K562 (cell line): ENCODE measurements at regions of chr16 and their contacts with region 1.

Region 1: GRCh38 chr16:85569615-85570212 is 43.4 kb upstream of the GSE1 start:
- DNase-seq: peak; percentile 62 to 96 (median 79)
- ATAC-seq: peak; percentile 60
- H3K4me3 ChIP-seq: peak overlapping the region; percentile 40
- H3K27ac ChIP-seq: peak overlapping the region; percentile 97
- H3K4me1 ChIP-seq: peaks cover 90 to 98% of the 10 kb centered on the region in 2 experiments
- H3K27me3 ChIP-seq: no peaks in the 10 kb centered on the region; a peak in 1 of 5 replicates
- CTCF ChIP-seq: no peak
- EP300 ChIP-seq: peak; percentile 71; the same call in 1 of the 2 replicates
- POLR2A ChIP-seq: peak; percentile 84
- RAD21 ChIP-seq: no peak

Region 2: DNA sequence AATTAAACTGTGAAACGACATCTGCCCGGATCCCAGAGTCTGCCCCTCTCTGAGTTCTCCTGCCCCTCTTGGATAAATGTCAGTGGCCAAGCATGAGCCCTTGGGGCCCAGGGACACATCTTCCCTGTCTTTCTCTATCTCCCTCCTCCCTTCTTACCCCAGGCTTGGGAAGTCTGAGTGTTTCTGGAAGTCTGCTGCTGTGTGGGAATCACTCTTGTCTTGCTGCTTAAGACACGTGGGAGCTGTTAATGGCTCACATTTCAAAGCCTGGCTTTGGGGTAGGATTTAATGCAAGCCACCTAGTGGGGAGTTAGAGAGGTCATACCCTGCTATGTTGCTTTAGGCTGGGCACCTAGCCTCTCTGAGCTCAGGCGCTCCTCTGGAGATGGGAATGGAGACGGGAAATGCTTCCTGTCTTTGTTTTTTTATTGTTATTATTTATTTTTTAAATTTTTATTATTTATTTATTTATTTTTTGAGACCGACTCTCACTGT is 239.0 kb before region 1 on chr16:
- CTCF ChIA-PET with region 1: no interaction called
- POLR2A ChIA-PET with region 1: interaction called, 3 read pairs
- in situ Hi-C with region 1: no loop called
- intact Hi-C with region 1: loop called (anchors 10 kb)
- DNase-seq: peak; percentile 81 to 89 (median 86)
- ATAC-seq: peak; percentile 74
- H3K4me3 ChIP-seq: no peak overlapping the region
- H3K27ac ChIP-seq: peak overlapping the region; percentile 62; the same call in 2 of the 3 replicates
- H3K4me1 ChIP-seq: peaks cover 67 to 80% of the 10 kb centered on the region in 2 experiments
- H3K27me3 ChIP-seq: no peaks in the 10 kb centered on the region
- CTCF ChIP-seq: peak; percentile 76 to 79 (median 76)
- EP300 ChIP-seq: no peak
- POLR2A ChIP-seq: no peak
- RAD21 ChIP-seq: peak; percentile 58 to 65

Region 3: DNA sequence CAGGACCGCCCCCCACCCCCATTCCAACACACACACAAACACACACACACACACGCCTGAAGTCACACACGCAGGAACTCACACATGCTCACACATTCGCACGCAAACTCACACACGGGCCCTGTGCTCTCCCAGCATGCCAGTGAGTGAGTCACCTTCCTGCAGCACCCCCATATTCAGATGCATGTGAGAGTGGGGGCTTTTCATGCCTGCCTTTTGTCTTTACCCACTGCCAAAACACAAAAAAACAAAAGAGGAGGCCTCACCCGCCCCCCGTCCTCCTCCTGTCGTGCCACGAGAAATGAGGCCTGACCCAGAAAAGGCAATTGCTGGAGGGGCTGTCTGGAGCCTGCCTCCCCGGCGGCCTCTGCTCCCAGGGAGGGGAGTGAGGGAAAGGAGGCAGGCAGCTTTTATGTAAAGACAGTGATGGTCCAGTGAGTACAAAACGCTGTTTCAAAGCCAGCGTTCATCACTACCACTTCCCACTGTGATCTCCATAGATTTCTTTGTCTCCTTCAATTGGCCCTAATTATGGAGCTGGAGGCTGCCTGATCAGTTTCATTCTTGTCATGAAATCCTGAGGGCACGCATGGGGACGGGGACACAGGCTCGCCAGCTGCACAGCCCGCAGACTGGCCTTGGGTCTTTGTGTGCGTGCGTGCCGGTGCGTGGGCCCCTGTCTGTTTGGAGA is 13.9 kb after region 1 on chr16:
- CTCF ChIA-PET with region 1: no interaction called
- POLR2A ChIA-PET with region 1: interaction called, 28 read pairs
- in situ Hi-C with region 1: no loop called
- intact Hi-C with region 1: no loop called
- DNase-seq: no peak
- ATAC-seq: no peak
- H3K4me3 ChIP-seq: no peak overlapping the region
- H3K27ac ChIP-seq: peak overlapping the region; percentile 16; the same call in 1 of the 3 replicates
- H3K4me1 ChIP-seq: peaks cover 54 to 93% of the 10 kb centered on the region in 2 experiments
- H3K27me3 ChIP-seq: no peaks in the 10 kb centered on the region
- CTCF ChIP-seq: no peak
- EP300 ChIP-seq: no peak
- POLR2A ChIP-seq: no peak
- RAD21 ChIP-seq: no peak

Region 4: DNA sequence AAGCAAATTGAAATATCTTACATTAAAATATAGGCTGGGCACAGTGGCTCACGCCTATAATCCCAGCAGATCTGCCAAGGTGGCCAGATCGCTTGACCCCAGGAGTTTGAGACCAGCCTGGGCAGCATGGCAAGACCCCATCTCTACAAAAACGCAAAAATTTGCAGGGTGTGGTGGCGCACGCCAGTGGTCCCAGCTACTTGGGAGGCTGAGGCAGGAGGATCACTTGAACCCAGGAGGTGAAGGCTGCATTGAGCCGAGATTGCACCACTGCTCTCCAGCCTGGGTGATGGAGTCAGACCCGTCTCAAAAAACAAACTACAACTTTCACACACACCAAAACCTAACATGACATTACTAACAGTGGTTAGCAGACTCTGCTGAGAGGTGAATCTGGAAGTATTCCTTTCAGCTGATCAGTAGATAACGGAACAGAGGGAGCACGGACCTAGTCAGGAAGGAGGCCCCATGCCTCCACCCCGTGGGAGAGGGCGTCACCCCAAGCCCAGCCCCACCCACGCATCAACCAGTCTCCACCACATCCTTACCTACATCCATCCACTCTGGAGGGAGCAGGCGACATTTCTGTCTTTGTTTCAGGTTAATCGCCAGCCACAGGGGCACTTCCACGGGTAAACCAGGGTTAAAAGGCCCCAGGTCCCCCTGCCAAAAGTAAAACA is 117.3 kb after region 1 on chr16:
- CTCF ChIA-PET with region 1: no interaction called
- POLR2A ChIA-PET with region 1: no interaction called
- in situ Hi-C with region 1: no loop called
- intact Hi-C with region 1: no loop called
- DNase-seq: peak; percentile 69 to 75 (median 73)
- ATAC-seq: peak; percentile 52
- H3K4me3 ChIP-seq: peak overlapping the region; percentile 90
- H3K27ac ChIP-seq: 0 out of 3 replicates have a peak overlapping the region, but pooled peaks have one; percentile 89
- H3K4me1 ChIP-seq: peaks cover 17 to 33% of the 10 kb centered on the region in 2 experiments; a peak in 4 of 5 replicates
- H3K27me3 ChIP-seq: no peaks in the 10 kb centered on the region
- CTCF ChIP-seq: no peak
- EP300 ChIP-seq: no peak
- POLR2A ChIP-seq: no peak
- RAD21 ChIP-seq: no peak

Region 5: DNA sequence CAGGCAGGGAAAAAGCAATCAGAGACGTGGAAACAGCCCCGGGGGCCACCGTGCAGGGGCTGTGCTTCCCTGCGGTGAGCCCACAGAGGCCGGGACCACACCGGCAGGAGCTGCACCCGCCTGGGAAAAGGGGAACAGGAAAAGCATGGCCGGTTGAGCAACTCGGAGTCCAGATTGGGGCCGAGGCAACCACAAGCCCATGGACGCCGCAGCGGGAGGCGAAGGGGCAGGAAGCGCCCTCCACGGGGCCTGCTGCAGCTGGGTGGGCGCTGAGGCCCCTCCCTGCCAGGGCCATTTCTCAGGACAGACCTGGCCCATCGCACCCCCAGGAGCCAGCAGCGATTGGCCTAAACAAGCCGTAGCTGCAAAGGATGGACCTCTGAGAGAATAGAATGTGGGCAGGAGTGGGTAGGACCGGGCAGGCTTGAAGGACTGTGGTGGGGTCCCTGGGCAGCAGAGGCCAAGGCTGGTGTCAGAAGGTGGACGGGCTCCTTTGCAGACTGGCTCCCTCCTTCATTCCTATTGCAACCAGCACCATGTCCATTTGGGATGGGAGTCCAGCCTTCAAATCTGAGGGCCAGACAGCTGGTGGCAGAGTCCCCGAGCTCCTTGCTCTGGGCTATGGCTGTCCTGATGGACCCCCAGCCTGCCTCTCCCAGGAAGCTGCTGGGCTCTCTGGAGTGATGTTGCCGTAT is 260.2 kb after region 1 on chr16:
- CTCF ChIA-PET with region 1: no interaction called
- POLR2A ChIA-PET with region 1: no interaction called
- in situ Hi-C with region 1: no loop called
- intact Hi-C with region 1: no loop called
- DNase-seq: no peak
- ATAC-seq: no peak
- H3K4me3 ChIP-seq: no peak overlapping the region
- H3K27ac ChIP-seq: no peak overlapping the region
- H3K4me1 ChIP-seq: no peaks in the 10 kb centered on the region
- H3K27me3 ChIP-seq: peaks cover 14 to 52% of the 10 kb centered on the region in 2 experiments
- CTCF ChIP-seq: no peak
- EP300 ChIP-seq: no peak
- POLR2A ChIP-seq: no peak
- RAD21 ChIP-seq: no peak